Right cardiac atrium (tissue), 5 donors: ENCODE measurements at regions of chr17 and their contacts with region 1.

Region 1: GRCh38 chr17:35312790-35313711 is 60.4 kb downstream of the SLFN11 start:
- DNase-seq: peak; percentile 37 to 70 (median 60)
- ATAC-seq: peak; percentile 88 to 94
- H3K4me3 ChIP-seq: peak overlapping the region; percentile 42
- H3K27ac ChIP-seq: peak overlapping the region; percentile 80
- H3K4me1 ChIP-seq: peaks cover 10% of the 10 kb centered on the region
- H3K27me3 ChIP-seq: no peaks in the 10 kb centered on the region

Region 2: DNA sequence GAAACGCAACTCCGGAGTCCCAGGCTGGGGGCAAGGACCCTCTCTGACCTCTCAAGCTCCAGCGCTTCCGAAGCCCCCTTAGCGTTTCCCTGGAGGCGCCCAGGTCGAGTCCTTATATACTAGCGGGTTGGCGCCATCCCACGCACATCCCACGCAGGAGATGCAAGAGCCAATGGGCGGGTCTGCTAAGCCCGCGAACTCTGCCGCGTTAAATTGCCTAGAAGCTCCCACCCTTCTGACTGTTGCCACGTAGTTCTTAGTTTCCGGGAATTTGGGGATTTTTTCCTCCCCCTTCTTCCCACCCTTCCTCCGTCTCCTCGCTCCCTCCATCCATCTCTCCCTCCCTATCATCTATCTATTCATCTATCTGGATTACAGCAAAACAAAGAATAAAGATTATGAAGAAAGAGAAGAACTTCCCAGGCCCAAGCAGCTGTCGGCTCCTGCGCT is 60.5 kb after region 1 on chr17 and contains the start of gene SLFN11:
- intact Hi-C with region 1: loop called in 1 of 4 experiments (anchors 2 kb)
- DNase-seq: peak; percentile 92 to 96 (median 94)
- ATAC-seq: peak; percentile 97 to 98
- H3K4me3 ChIP-seq: peak within 1 kb of the TSS; percentile 96
- H3K27ac ChIP-seq: peak within 1 kb of the TSS; percentile 96
- H3K4me1 ChIP-seq: peaks cover 2% of the 10 kb centered on the region
- H3K27me3 ChIP-seq: no peaks in the 10 kb centered on the region
- total RNA-seq, gene SLFN11: 12.0 to 21.5 (median 19.0) TPM

Region 3: GRCh38 chr17:35529866-35530265 is 216.8 kb after region 1 on chr17:
- intact Hi-C with region 1: loop called in 3 of 4 experiments (anchors 2 to 5 kb)
- DNase-seq: no peak
- ATAC-seq: no peak
- H3K4me3 ChIP-seq: no peak overlapping the region
- H3K27ac ChIP-seq: no peak overlapping the region
- H3K4me1 ChIP-seq: no peaks in the 10 kb centered on the region
- H3K27me3 ChIP-seq: no peaks in the 10 kb centered on the region

Region 4: DNA sequence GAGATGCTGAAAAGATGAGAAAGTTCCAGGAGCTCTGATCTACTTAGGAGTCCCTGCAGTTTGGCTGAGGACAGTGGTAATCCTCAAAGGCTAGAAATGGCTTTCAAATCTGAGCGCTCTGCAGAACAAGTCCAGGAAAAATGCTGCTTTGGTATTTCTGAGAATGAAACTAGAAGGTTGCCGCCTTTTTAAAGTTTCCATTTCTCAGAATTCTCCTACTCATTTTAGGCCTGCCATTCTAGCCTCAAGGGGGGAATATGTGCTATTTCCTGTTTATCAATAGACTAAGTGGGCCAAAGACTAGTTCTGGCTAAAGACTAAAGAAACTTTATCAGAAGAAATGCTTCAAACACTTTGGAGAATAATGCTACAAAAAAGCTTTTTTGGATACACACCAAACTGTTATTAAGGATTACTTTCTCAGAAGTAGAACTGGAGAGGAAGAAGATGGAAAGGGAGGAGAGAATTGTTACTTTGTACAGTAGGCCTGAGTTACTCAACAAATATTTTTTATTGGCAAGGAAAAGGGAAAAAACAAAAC is 224.6 kb after region 1 on chr17 and contains the start of gene SLFN12L:
- intact Hi-C with region 1: loop called (anchors 1 to 5 kb)
- DNase-seq: no peak
- ATAC-seq: peak; percentile 37 to 44
- H3K4me3 ChIP-seq: no peak within 1 kb of the TSS
- H3K27ac ChIP-seq: peak within 1 kb of the TSS; percentile 62
- H3K4me1 ChIP-seq: peaks cover 1% of the 10 kb centered on the region
- H3K27me3 ChIP-seq: no peaks in the 10 kb centered on the region
- total RNA-seq, gene SLFN12L: 0.23 to 1.0 (median 0.55) TPM